Activated CD4-positive, alpha-beta memory T cell treated with anti-CD3 and anti-CD28 coated beads, Interleukin-2, amount 10 ng/mL, durations not matched to agents 7 days and 5 days (primary cell): ENCODE measurements at regions of chr18 and their contacts with region 1.

Region 1: DNA sequence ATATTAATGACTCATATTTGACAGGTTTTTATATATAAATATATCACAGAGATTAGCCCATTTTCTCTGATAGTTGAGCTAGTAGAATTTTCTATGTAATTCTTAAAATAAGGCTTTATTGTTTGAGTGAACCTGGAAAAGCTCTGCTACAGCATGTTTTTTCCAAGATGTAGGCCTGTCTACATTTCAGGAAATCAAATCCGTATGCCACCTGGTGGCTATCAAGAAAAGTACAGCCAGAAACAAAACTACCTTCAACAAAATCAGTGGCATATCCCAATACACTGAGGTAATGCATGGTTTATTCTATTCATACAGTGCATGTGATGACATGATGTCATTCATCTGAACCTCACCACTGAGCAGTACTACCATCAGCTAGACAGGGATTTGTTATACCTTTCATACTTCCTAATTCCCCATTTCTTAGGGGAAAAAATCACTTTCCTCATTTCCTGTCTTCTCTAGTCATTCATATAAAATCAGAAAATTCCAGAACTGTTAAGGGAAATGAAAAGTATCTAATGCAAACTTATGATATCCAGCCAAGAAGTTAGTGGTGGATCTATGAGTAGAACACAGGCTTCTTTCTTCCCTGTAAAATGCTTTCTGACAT is 310.4 kb upstream of the SYT4 start:
- DNase-seq: no peak
- H3K4me3 Mint-ChIP-seq: no peak overlapping the region
- H3K27ac Mint-ChIP-seq: no peak overlapping the region
- H3K4me1 Mint-ChIP-seq: no peaks in the 10 kb centered on the region
- H3K27me3 Mint-ChIP-seq: no peaks in the 10 kb centered on the region

Region 2: GRCh38 chr18:43350176-43350575 is 237.5 kb before region 1 on chr18:
- CTCF ChIA-PET with region 1: no interaction called
- POLR2A ChIA-PET with region 1: no interaction called
- DNase-seq: no peak
- H3K4me3 Mint-ChIP-seq: no peak overlapping the region
- H3K27ac Mint-ChIP-seq: no peak overlapping the region
- H3K4me1 Mint-ChIP-seq: no peaks in the 10 kb centered on the region
- H3K27me3 Mint-ChIP-seq: no peaks in the 10 kb centered on the region

Region 3: GRCh38 chr18:43571078-43571689 is 16.5 kb before region 1 on chr18:
- CTCF ChIA-PET with region 1: interaction called, 14 read pairs
- POLR2A ChIA-PET with region 1: no interaction called
- DNase-seq: no peak
- H3K4me3 Mint-ChIP-seq: no peak overlapping the region
- H3K27ac Mint-ChIP-seq: no peak overlapping the region
- H3K4me1 Mint-ChIP-seq: no peaks in the 10 kb centered on the region
- H3K27me3 Mint-ChIP-seq: no peaks in the 10 kb centered on the region